Astrocyte of the cerebellum (primary cell): ENCODE measurements at regions of chr1 and their contacts with region 1.

Region 1: GRCh38 chr1:4527819-4528218 is 126.6 kb upstream of the AJAP1 start:
- DNase-seq: no peak
- H3K4me3 ChIP-seq: no peak overlapping the region
- CTCF ChIP-seq: no peak

Region 2: GRCh38 chr1:4476394-4476793 is 51.4 kb before region 1 on chr1:
- in situ Hi-C with region 1: loop called (anchors 5 kb)
- DNase-seq: no peak
- H3K4me3 ChIP-seq: no peak overlapping the region
- CTCF ChIP-seq: no peak